ENCODE measurements at regions of chr17 and their contacts with region 1.

Region 1: GRCh38 chr17:64129764-64130558 is at the start of gene ERN1:
- DNase-seq: peak; percentile 91 to 95 (median 93)
- H3K4me3 ChIP-seq: peak within 1 kb of the TSS; percentile 76 to 98 (median 80)
- H3K4me3 Mint-ChIP-seq: peak within 1 kb of the TSS; percentile 97
- H3K27ac ChIP-seq: peak within 1 kb of the TSS; percentile 93 to 99
- H3K27ac Mint-ChIP-seq: peak within 1 kb of the TSS; percentile 93 to 98 (median 97)
- H3K4me1 ChIP-seq: peaks cover 48 to 56% of the 10 kb centered on the region in 2 donors
- H3K4me1 Mint-ChIP-seq: peaks cover 52% of the 10 kb centered on the region
- H3K27me3 ChIP-seq: no peaks in the 10 kb centered on the region
- H3K27me3 Mint-ChIP-seq: no peaks in the 10 kb centered on the region
- CTCF ChIP-seq: no peak
- polyA plus RNA-seq, gene ERN1: 11.0 to 27.5 (median 13.7) TPM

Region 2: GRCh38 chr17:63919311-63919723 is 210.6 kb before region 1 on chr17:
- intact Hi-C with region 1: loop called (anchors 2 to 5 kb)
- DNase-seq: peak; percentile 65 to 76 (median 71)
- H3K4me3 ChIP-seq: no peak overlapping the region
- H3K4me3 Mint-ChIP-seq: no peak overlapping the region
- H3K27ac ChIP-seq: no peak overlapping the region
- H3K27ac Mint-ChIP-seq: peak overlapping the region in 2 of 7 donors; percentile 47 to 55
- H3K4me1 ChIP-seq: peaks cover 0 to 5% of the 10 kb centered on the region in 2 donors
- H3K4me1 Mint-ChIP-seq: peaks cover 24% of the 10 kb centered on the region
- H3K27me3 ChIP-seq: no peaks in the 10 kb centered on the region
- H3K27me3 Mint-ChIP-seq: peaks cover 3 to 9% (median 4%) of the 10 kb centered on the region in 3 donors
- CTCF ChIP-seq: peak; percentile 90

Region 3: GRCh38 chr17:64025732-64026294 is 104.1 kb before region 1 on chr17:
- intact Hi-C with region 1: loop called (anchors 2 kb)
- DNase-seq: peak; percentile 86 to 89 (median 89)
- H3K4me3 ChIP-seq: peak overlapping the region in 2 of 3 experiments; percentile 1 to 52
- H3K4me3 Mint-ChIP-seq: peak overlapping the region; percentile 77 to 90
- H3K27ac ChIP-seq: peak overlapping the region in 1 of 2 donors; percentile 50
- H3K27ac Mint-ChIP-seq: peak overlapping the region in 5 of 7 donors; percentile 43 to 84 (median 78)
- H3K4me1 ChIP-seq: peaks cover 17 to 20% of the 10 kb centered on the region in 2 donors
- H3K4me1 Mint-ChIP-seq: peaks cover 31% of the 10 kb centered on the region
- H3K27me3 ChIP-seq: no peaks in the 10 kb centered on the region
- H3K27me3 Mint-ChIP-seq: peaks cover 0 to 6% (median 3%) of the 10 kb centered on the region in 3 donors
- CTCF ChIP-seq: peak; percentile 99

Region 4: GRCh38 chr17:64063766-64064224 is 66.2 kb before region 1 on chr17:
- intact Hi-C with region 1: loop called (anchors 2 to 5 kb)
- DNase-seq: peak; percentile 58 to 73 (median 59)
- H3K4me3 ChIP-seq: peak overlapping the region in 1 of 3 experiments; percentile 39
- H3K4me3 Mint-ChIP-seq: peak overlapping the region in 1 of 2 donors; percentile 42
- H3K27ac ChIP-seq: peak overlapping the region; percentile 71 to 79
- H3K27ac Mint-ChIP-seq: peak overlapping the region; percentile 90 to 98 (median 92)
- H3K4me1 ChIP-seq: peaks cover 50 to 69% of the 10 kb centered on the region in 2 donors
- H3K4me1 Mint-ChIP-seq: peaks cover 73% of the 10 kb centered on the region
- H3K27me3 ChIP-seq: no peaks in the 10 kb centered on the region
- H3K27me3 Mint-ChIP-seq: no peaks in the 10 kb centered on the region
- CTCF ChIP-seq: peak; percentile 66

Region 5: GRCh38 chr17:64074704-64075426 is 55.1 kb before region 1 on chr17:
- intact Hi-C with region 1: loop called in 1 of 2 experiments (anchors 5 kb)
- DNase-seq: peak in 2 of 3 donors; percentile 75 to 94
- H3K4me3 ChIP-seq: peak overlapping the region; percentile 18 to 68 (median 33)
- H3K4me3 Mint-ChIP-seq: peak overlapping the region; percentile 61 to 88
- H3K27ac ChIP-seq: peak overlapping the region; percentile 96 to 97
- H3K27ac Mint-ChIP-seq: peak overlapping the region; percentile 97 to 100 (median 99)
- H3K4me1 ChIP-seq: peaks cover 52 to 53% of the 10 kb centered on the region in 2 donors
- H3K4me1 Mint-ChIP-seq: peaks cover 49% of the 10 kb centered on the region
- H3K27me3 ChIP-seq: no peaks in the 10 kb centered on the region
- H3K27me3 Mint-ChIP-seq: peaks cover 0 to 1% (median 0%) of the 10 kb centered on the region in 3 donors
- CTCF ChIP-seq: no peak

Region 6: DNA sequence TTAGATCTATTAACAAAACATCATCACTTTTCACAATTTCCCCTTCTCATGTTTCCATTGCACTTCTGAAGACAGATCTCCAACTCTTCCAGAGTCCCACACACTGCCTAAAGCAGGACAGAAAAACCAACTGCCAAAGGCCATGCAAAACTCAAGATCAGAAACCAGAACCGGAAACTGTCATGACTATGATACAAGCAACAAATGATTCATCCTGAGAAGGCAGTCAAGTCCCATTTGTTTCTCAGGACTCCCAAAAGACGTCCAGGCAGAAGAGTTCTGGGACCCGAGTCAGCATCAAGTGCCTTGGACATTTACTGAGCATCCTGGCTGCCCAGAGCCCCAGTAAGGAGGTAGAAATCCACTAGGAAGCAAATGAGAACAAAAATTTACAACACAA is 38.8 kb before region 1 on chr17:
- intact Hi-C with region 1: loop called in 1 of 2 experiments (anchors 5 kb)
- DNase-seq: peak; percentile 41 to 66 (median 41)
- H3K4me3 ChIP-seq: no peak overlapping the region
- H3K4me3 Mint-ChIP-seq: no peak overlapping the region
- H3K27ac ChIP-seq: peak overlapping the region; percentile 68 to 91
- H3K27ac Mint-ChIP-seq: peak overlapping the region; percentile 93 to 97 (median 95)
- H3K4me1 ChIP-seq: peaks cover 30 to 44% of the 10 kb centered on the region in 2 donors
- H3K4me1 Mint-ChIP-seq: peaks cover 54% of the 10 kb centered on the region
- H3K27me3 ChIP-seq: no peaks in the 10 kb centered on the region
- H3K27me3 Mint-ChIP-seq: peaks cover 0 to 2% (median 0%) of the 10 kb centered on the region in 3 donors
- CTCF ChIP-seq: no peak

Region 7: GRCh38 chr17:64102627-64103390 is 27.2 kb before region 1 on chr17:
- intact Hi-C with region 1: no loop called
- DNase-seq: no peak
- H3K4me3 ChIP-seq: no peak overlapping the region
- H3K4me3 Mint-ChIP-seq: no peak overlapping the region
- H3K27ac ChIP-seq: no peak overlapping the region
- H3K27ac Mint-ChIP-seq: peak overlapping the region in 1 of 7 donors; percentile 12
- H3K4me1 ChIP-seq: peaks cover 16 to 20% of the 10 kb centered on the region in 2 donors
- H3K4me1 Mint-ChIP-seq: peaks cover 32% of the 10 kb centered on the region
- H3K27me3 ChIP-seq: no peaks in the 10 kb centered on the region
- H3K27me3 Mint-ChIP-seq: peaks cover 0 to 2% (median 0%) of the 10 kb centered on the region in 3 donors
- CTCF ChIP-seq: no peak

Region 8: GRCh38 chr17:64113006-64113405 is 17.0 kb before region 1 on chr17:
- intact Hi-C with region 1: loop called in 1 of 2 experiments (anchors 2 kb)
- DNase-seq: no peak
- H3K4me3 ChIP-seq: no peak overlapping the region
- H3K4me3 Mint-ChIP-seq: no peak overlapping the region
- H3K27ac ChIP-seq: peak overlapping the region in 1 of 2 donors; percentile 32
- H3K27ac Mint-ChIP-seq: no peak overlapping the region
- H3K4me1 ChIP-seq: peaks cover 40 to 45% of the 10 kb centered on the region in 2 donors
- H3K4me1 Mint-ChIP-seq: peaks cover 54% of the 10 kb centered on the region
- H3K27me3 ChIP-seq: no peaks in the 10 kb centered on the region
- H3K27me3 Mint-ChIP-seq: peaks cover 0 to 3% (median 0%) of the 10 kb centered on the region in 3 donors
- CTCF ChIP-seq: no peak

Measured in CD14-positive monocyte (primary cell).